Activated naive CD4-positive, alpha-beta T cell treated with anti-CD3 and anti-CD28 coated beads for 36 hours (primary cell): ENCODE measurements at regions of chr17 and their contacts with region 1.

Region 1: DNA sequence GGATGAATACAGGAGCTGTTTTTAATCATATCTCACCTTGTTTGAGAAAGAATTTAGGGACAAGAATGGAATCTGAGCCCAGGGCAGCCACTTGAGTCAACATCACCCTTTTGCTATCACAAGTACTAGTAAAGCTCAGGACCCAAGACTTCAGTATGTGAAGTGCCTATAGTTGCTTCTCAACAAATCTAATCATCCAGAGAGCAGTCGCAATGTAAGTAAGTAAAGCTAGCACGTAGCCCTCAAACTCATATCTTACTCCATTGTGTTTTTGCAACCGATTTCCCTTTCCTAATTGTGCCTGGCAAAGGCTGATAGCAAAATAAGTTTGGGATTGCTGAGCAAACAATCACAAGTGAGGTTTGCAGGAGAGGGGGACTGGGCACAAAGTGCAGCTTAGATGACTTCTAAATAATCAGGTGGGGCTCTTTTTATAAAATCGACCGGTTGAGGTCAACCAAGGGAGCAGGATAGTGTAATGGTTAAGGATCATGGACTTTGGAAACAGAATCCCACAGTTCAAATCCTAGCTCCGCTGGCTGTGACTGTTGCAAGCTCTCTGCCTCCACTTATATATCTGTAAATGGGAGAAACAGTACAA is 13.0 kb downstream of the TOB1 start:
- DNase-seq: no peak
- H3K4me3 Mint-ChIP-seq: no peak overlapping the region
- H3K27ac Mint-ChIP-seq: no peak overlapping the region
- H3K4me1 Mint-ChIP-seq: peaks cover 14% of the 10 kb centered on the region
- H3K27me3 Mint-ChIP-seq: no peaks in the 10 kb centered on the region

Region 2: DNA sequence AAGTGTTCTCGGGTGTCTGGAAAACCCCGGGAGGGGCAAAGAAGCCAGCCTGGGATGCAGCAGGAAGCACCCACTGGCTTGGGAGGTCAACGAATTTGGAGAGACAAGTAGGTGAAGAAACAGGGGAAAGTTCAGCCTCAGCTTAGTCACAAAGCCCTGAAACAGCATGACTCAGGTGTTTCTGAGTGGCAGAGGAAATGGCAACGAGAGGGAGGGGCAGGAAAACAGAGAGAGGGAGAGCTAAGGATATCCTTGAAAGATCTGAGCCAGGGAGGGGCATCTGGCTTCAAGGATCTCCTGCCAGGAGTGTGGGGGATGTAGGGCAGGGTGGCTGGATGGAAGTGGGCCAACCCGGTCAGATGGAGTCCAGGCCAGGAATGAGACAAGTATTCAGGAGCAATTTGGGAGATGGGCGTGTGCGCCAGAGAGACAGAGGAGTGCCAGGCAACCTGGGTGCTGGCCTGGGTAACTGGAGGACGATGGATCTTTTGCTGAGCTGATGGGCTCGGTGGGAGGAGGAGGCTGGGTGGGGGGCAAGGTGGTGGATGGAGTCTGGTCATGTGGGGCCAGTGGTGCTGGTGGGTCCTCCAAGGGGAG is 191.2 kb before region 1 on chr17:
- CTCF ChIA-PET with region 1: no interaction called
- intact Hi-C with region 1: no loop called
- DNase-seq: peak; percentile 78
- H3K4me3 Mint-ChIP-seq: no peak overlapping the region
- H3K27ac Mint-ChIP-seq: peak overlapping the region; percentile 78
- H3K4me1 Mint-ChIP-seq: peaks cover 14% of the 10 kb centered on the region
- H3K27me3 Mint-ChIP-seq: no peaks in the 10 kb centered on the region

Region 3: DNA sequence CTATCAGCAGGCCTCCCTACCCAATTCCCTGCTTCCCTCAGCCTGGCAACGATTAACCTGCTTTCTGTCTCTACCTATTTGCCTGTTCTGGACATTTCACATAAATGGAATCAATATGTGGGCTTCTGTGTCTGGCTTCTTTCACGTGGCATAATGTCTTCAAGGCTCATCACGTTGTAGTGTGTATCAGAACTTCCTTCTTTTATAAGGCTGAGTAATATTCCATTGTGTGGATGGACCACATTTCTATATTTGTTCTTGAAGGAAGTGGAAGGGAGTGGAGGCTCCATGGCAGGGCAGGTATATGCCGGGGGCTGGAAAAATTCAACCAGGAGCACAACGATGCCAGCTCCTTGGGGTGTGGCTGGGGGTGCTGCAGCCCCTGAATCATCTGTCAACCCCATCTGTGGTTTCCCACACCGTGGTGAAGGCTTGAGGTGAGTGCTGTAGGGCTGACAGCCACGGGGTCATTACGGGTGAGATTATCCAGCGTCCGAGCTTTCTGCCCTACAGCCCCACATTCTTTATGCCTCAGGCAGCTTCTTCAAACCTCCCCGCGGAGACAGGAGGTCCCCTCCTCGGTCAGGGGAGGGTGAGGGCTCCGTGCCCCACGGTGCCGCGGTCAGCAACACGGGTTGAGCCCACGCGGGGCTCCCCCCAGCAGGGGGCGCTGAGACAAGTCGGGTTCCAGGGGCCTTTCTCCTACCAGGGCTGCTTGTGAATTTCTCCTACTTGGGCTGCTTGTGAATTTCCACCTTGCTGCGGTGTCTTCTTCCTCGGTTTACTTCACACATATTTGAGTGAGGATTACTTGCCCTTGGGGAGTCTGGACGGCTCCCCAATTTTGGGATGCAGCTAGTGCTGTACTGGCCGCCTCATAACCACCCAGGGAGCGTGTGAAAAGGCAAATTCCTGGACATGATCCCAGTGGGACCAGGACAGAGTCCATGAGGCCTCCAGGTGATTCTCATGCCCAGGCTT is 36.1 kb before region 1 on chr17:
- CTCF ChIA-PET with region 1: interaction called, 10 read pairs
- intact Hi-C with region 1: no loop called
- DNase-seq: peak; percentile 59
- H3K4me3 Mint-ChIP-seq: no peak overlapping the region
- H3K27ac Mint-ChIP-seq: no peak overlapping the region
- H3K4me1 Mint-ChIP-seq: no peaks in the 10 kb centered on the region
- H3K27me3 Mint-ChIP-seq: no peaks in the 10 kb centered on the region

Region 4: DNA sequence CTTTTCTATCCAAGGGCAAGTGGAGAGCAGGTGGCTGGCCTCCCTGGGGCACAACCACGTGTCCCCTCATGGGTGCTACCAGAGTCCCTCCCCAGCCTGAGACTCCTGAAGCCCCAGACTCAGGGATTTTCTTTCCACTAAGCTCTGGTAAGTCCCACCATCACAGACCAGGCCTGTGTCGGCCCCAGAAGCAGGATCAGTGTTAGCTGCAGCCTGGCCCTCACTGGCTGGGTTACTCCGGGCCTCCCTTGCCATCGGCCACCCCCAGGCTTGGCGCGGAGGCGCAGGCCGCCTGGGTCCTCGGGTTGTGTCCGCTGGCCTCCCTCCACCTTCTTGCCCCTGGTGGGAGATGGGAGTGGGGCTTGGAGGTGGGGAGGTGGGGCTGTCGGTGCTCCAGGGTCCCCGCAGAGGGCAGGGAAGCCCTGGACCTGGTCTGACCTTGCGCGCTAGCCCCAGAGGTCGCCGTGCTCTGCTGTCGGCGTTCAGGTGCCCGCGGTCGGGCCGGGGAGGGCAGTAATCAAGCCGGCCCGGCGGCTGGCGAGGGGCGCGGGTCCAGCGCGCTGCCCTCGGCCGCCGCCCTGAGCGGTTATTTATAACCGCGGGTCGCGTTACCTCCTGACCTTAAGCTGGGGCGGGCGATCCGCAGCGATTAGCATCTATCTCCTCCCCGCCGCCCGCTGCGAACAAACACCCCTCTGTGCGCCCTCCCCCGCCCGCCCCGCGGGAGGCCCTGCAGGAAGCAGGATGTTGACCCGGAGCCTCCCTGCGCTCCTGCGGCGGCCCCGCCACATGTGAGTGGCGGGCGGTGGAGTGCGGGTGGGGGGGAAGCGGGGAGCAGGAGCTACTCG is 91.2 kb after region 1 on chr17:
- CTCF ChIA-PET with region 1: interaction called, 81 read pairs
- intact Hi-C with region 1: no loop called
- DNase-seq: peak; percentile 91
- H3K4me3 Mint-ChIP-seq: peak overlapping the region; percentile 81
- H3K27ac Mint-ChIP-seq: peak overlapping the region; percentile 91
- H3K4me1 Mint-ChIP-seq: peaks cover 28% of the 10 kb centered on the region
- H3K27me3 Mint-ChIP-seq: no peaks in the 10 kb centered on the region

Region 5: DNA sequence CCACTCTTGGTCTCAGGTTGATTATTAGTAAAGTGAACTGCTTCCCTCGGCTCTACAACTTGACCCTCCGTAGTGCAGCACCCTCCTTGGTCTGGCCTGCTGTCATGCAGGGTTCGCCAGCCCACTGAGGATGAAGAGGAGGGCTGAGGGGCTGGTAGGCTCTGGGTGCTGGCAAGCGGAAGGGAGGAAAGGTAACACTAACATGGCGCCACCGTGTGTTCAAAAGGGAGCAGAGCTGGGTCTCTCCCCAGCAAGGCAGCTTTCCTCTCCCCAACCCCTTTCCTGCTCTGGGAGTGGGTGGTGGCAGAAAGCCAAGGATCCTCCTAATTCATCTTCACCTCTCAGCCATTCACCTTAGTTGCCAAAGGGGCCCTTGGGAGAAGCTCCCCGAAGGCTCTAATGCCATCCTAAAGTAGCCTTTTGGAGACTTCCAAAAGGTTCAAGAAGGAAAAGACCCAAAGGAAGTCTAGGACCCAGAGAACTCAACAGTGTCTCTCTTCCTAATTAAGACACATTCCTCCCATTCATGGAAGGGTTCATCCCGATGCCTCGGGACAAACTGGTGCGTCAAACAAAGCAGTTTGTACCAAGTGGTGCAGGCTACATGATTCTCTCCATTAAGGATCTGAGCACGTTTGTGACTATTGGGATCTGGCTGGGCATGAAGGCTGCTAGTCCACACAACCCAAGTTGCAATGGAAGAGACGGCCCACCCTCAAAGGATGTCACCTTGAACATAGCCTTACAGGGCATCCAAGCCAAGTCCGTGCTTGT is 103.8 kb after region 1 on chr17:
- CTCF ChIA-PET with region 1: interaction called, 83 read pairs
- intact Hi-C with region 1: loop called (anchors 1 kb)
- DNase-seq: peak; percentile 83
- H3K4me3 Mint-ChIP-seq: no peak overlapping the region
- H3K27ac Mint-ChIP-seq: peak overlapping the region; percentile 53
- H3K4me1 Mint-ChIP-seq: peaks cover 2% of the 10 kb centered on the region
- H3K27me3 Mint-ChIP-seq: no peaks in the 10 kb centered on the region